ENCODE measurements at regions of chr1 and their contacts with region 1.

Region 1: DNA sequence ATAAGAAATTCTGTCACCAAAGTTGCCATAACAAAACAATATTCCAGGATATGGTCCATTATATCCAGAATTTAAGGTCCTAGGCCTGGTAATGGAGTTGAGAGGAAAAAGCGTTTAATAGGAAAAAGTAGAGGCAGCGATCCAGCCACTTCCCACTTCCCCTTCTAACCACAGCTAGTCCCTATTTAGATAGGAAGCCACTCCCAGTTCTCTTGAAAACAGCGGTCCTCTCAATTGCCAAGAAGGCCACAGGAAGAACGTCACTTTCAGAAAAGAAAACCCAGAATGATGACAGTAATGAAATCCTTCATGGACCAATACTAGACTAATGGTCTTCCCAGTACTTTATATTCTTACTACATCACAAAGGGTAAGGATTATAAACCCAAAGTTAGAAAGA is 38.6 kb downstream of the ABL2 start:
- DNase-seq: peak in 1 of 2 donors; percentile 67
- ATAC-seq: peak; percentile 43 to 95 (median 86)
- H3K4me3 ChIP-seq: no peak overlapping the region
- H3K27ac ChIP-seq: peak overlapping the region; percentile 37 to 91 (median 76)
- H3K4me1 ChIP-seq: peaks cover 0 to 26% (median 8%) of the 10 kb centered on the region in 9 donors
- H3K27me3 ChIP-seq: no peaks in the 10 kb centered on the region
- CTCF ChIP-seq: no peak

Region 2: DNA sequence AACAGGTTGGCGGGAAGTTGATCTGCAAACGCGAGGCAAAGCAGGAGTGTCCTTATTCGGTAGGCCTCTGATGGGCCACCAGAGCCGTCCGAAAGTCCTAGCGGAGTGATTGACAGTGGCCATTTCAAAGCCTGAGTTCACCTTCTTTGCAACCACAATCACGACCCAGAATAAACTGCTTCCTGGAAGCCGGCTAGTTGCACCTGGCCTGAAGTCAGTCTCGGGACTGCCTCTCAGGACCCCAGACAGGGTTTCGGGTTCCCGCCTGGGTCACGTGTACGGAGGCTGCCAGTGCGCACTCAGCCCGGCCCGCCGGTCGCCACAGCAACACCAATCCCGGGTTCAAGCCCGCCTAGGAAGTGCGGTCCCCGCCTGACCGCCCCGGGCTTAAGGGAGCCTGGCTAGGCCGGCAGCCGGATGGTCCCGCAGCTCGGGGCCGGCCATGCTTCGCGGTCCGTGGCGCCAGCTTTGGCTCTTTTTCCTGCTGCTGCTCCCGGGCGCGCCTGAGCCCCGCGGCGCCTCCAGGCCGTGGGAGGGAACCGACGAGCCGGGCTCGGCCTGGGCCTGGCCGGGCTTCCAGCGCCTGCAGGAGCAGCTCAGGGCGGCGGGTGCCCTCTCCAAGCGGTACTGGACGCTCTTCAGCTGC is 109.1 kb before region 1 on chr1 and contains the start of gene TOR3A:
- intact Hi-C with region 1: loop called in 7 of 10 experiments (anchors 1 to 5 kb)
- DNase-seq: peak; percentile 92 to 93
- ATAC-seq: peak; percentile 97 to 99 (median 98)
- H3K4me3 ChIP-seq: peak within 1 kb of the TSS; percentile 80 to 99 (median 94)
- H3K27ac ChIP-seq: peak within 1 kb of the TSS; percentile 75 to 95 (median 92)
- H3K4me1 ChIP-seq: peaks cover 3 to 28% (median 17%) of the 10 kb centered on the region in 9 donors
- H3K27me3 ChIP-seq: no peaks in the 10 kb centered on the region
- CTCF ChIP-seq: no peak
- total RNA-seq, gene TOR3A: 6.8 to 18.0 (median 10.9) TPM

Region 3: GRCh38 chr1:179121159-179121938 is 69.5 kb before region 1 on chr1:
- intact Hi-C with region 1: loop called in 9 of 10 experiments (anchors 1 to 10 kb)
- DNase-seq: no peak
- ATAC-seq: peak in 4 of 8 donors; percentile 27 to 61 (median 51)
- H3K4me3 ChIP-seq: no peak overlapping the region
- H3K27ac ChIP-seq: peak overlapping the region in 1 of 10 donors; percentile 2
- H3K4me1 ChIP-seq: peaks cover 0 to 19% (median 4%) of the 10 kb centered on the region in 9 donors
- H3K27me3 ChIP-seq: no peaks in the 10 kb centered on the region
- CTCF ChIP-seq: peak; percentile 35 to 75 (median 63)

Region 4: DNA sequence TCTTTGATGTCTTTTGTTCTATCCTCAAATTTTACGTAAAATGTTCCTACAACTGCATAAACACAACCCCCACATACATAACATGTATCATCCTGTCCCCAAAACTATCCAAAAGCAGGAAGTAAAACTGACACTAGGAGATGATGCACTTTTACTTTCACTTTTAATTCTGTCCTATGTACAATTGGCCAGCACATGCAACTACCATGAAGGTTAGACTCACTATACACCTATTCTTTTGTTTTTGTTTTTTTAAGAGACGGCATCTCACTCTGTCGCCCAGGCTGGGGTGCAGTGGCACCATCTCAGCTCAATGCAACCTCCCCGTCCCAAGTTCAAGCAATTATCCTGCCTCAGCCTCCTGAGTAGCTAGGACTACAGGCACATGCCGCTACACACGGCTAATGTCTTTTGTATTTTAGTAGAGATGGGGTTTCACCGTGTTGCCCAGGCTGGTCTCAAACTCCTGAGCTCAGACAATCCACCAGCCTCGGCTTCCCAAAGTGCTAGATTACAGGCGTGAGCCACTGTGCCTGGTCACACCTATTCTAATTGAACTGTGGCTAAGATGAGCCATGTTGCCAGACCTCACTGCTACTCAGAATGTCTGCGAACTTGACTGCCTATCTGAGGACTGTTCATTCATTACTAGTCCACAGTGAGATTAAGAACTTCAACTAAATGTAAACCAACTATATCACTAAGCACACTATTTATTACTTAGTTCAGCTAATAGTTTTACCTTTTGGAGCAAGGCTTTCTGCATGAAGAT is 61.0 kb before region 1 on chr1:
- intact Hi-C with region 1: loop called in 3 of 10 experiments (anchors 5 to 10 kb)
- DNase-seq: no peak
- ATAC-seq: peak in 7 of 8 donors; percentile 71 to 89 (median 80)
- H3K4me3 ChIP-seq: peak overlapping the region in 9 of 10 donors; percentile 3 to 49 (median 36)
- H3K27ac ChIP-seq: peak overlapping the region in 9 of 10 donors; percentile 34 to 86 (median 62)
- H3K4me1 ChIP-seq: peaks cover 0 to 57% (median 20%) of the 10 kb centered on the region in 9 donors
- H3K27me3 ChIP-seq: no peaks in the 10 kb centered on the region
- CTCF ChIP-seq: no peak

Region 5: GRCh38 chr1:179151908-179152682 is 38.8 kb before region 1 on chr1:
- intact Hi-C with region 1: loop called in 1 of 10 experiments (anchors 5 kb)
- DNase-seq: no peak
- ATAC-seq: no peak
- H3K4me3 ChIP-seq: no peak overlapping the region
- H3K27ac ChIP-seq: peak overlapping the region in 3 of 10 donors; percentile 1 to 44 (median 28)
- H3K4me1 ChIP-seq: peaks cover 0 to 25% (median 16%) of the 10 kb centered on the region in 9 donors
- H3K27me3 ChIP-seq: no peaks in the 10 kb centered on the region
- CTCF ChIP-seq: no peak